ENCODE measurements at regions of chr17 and their contacts with region 1.

Region 1: GRCh38 chr17:7014261-7014994 is 2.0 kb downstream of the RNASEK start:
- DNase-seq: peak; percentile 98
- ATAC-seq: peak; percentile 90

Region 2: GRCh38 chr17:7656958-7657609 is 642.7 kb after region 1 on chr17:
- intact Hi-C with region 1: no loop called
- DNase-seq: peak; percentile 69
- ATAC-seq: peak; percentile 49

Region 3: GRCh38 chr17:7856883-7857723 is 842.7 kb after region 1 on chr17 and contains the start of gene NAA38:
- intact Hi-C with region 1: loop called (anchors 10 kb)
- DNase-seq: peak; percentile 97
- ATAC-seq: peak; percentile 94
- total RNA-seq, gene NAA38: 53.5 TPM